BJ (cell line): ENCODE measurements at regions of chr6 and their contacts with region 1.

Region 1: DNA sequence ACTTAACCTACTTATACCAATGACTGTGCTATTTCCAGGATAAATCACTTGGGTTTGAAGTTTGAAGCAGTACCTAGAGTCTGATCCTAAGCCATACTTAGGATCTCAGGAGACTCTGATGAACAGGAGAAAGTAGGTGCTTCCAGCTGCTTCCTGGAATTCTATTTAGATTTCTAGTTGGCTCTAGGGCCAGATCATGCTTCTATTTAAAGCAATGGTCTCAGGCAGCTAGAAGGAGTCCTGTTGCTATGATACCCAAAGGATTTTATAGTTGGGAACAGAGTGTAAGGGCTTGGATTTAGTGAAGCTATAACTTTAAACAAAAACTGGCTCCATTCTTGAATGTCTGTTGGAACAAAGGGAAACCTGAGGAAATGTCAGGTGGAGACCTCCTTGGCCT is 52.4 kb upstream of the TINAG start:
- DNase-seq: no peak
- H3K4me3 ChIP-seq: no peak overlapping the region
- H3K27me3 ChIP-seq: no peaks in the 10 kb centered on the region
- CTCF ChIP-seq: no peak

Region 2: DNA sequence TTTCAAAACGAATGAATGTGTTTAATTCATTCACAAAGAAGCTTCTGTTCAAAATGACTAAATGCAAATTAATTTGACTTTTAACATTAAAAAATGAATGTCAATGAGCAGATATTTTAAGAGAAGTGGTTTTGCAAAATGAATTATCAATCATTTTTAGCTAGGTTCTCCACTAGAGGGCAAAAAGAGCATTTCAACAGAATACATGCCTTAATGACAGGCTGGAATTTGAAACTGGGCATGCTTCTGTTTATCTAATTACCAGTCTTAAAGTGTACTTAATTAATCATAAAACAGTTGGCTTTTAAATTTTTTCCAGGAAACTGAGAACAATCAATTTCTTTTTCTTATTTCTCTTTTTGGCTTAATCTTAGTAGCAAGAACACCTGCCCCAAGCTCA is 11.5 kb before region 1 on chr6:
- CTCF ChIA-PET with region 1: interaction called, 10 read pairs
- POLR2A ChIA-PET with region 1: no interaction called
- DNase-seq: no peak
- H3K4me3 ChIP-seq: no peak overlapping the region
- H3K27me3 ChIP-seq: no peaks in the 10 kb centered on the region
- CTCF ChIP-seq: peak; percentile 65